Posterior vena cava (tissue), 2 donors: ENCODE measurements at regions of chr20 and their contacts with region 1.

Region 1: DNA sequence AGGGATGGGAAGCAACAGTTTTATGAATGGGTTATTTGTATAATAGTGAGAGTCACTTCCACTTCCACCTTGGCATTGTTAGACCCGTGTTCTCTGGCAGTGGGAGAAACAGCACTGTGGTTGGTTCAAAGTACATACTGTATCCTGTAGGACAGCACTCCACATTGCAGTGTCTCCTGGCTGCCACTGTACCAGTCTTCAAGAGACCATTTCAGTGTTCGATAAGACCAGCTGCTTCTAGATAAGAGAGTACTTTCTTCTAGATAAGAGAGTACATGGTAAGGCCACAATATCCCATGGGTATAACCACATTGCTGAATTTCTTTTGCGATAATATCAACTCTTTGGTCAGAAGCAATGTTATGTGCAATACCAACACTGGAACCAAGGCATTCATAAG is 28.8 kb downstream of the FITM2 start:
- DNase-seq: no peak

Region 2: DNA sequence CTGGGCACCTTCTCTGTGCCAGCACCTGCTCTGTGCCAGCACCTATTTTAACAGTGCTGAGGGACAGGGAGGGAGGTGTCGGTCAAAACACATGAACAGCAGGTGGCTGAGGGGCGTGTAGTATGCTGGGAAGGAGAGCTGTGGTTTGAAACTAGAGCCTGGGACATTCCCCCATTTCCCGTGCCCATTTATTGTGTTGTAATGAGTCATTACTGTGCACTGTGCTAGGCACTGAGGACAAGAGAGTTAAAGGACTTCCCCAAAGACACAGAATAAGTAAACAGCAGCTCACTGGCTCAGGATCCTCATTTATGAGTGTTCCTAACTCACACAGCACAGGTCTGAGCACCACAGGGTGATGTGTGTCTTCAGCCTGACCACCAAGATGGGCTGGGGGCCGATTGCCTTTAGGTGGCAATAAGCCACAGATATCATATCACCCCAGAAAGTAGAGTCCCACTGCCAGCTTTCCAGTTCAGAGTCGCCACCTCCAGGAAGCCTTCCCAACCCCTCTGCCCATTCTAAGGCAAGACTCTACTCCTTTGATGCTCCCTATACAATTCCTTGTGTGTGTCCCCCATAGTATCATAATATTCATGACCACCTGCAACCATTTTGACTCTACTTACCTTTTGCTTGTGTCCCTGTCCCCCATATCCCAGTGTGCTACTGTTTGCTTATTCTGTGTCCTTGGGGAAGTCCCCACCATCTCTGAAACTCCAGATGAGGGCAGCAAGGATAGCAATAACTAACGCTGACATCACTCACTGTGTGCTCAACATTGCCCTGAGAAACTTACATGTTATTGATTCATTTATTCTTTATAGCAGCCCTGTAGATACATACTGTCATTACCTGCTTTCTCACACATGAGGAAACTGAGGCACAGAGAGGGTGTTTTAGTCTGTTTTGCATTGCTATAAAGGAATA is 280.3 kb before region 1 on chr20:
- intact Hi-C with region 1: no loop called
- DNase-seq: no peak

Region 3: GRCh38 chr20:44357555-44358125 is 75.4 kb after region 1 on chr20:
- intact Hi-C with region 1: loop called in 1 of 2 experiments (anchors 2 kb)
- DNase-seq: no peak

Region 4: DNA sequence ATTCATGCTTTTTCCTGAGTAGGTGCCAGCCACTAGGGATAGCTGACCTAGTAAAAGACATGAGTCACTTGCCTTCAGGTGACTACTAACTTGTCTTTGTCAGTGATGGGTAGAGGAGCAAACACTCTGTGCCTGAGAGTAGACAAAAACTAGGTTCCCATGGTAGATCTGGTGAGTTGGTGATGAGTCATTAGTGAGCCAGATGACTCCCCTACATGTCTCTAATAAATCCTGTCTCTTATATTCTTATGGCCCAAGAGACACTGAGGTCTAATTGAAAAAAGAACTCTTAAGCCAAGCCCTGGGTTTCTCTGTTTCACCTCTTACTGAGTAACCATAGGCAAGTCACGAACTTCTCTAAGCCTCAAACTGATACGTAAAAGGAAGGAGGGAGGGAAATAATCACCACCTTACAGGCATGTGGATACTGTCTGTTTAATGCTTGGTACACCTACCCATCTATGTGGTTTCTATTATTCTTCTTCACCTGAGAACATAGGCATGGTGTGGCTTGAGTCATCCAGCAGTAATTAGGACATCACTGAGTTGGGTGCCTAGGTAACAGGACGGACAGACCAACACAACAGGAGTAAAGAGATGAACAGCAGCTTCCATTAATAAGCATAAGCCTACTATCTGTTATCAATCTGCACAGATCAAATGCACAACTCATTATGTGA is 213.8 kb after region 1 on chr20:
- intact Hi-C with region 1: no loop called
- DNase-seq: no peak

Region 5: GRCh38 chr20:44885392-44886265 is 603.4 kb after region 1 on chr20 and contains the start of gene YWHAB:
- intact Hi-C with region 1: no loop called
- DNase-seq: peak; percentile 100
- total RNA-seq, gene YWHAB: 165 to 179 TPM